Left cardiac atrium (tissue), 4 donors: ENCODE measurements at regions of chr15 and their contacts with region 1.

Region 1: DNA sequence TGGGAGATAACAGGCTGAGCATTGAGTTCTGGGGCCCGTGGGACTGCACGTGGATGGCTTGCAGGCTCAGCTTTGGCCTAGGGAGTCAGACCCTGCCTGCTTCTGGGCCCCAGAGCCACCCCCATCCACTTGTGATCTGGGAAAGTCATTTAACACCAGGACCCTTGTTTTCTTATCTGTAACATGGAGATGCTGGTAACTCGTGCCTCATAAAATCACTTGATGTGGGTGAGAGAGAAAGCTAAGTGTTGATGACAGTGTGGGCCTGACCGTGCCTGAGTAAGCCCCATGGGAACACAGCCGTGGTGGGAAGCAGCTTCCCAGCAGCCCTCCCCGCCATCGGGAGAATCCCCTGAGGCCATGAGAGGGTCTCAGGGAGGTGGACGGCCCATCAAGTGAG is 378.1 kb downstream of the GABRB3 start:
- DNase-seq: peak; percentile 55
- ATAC-seq: peak; percentile 77 to 79

Region 2: DNA sequence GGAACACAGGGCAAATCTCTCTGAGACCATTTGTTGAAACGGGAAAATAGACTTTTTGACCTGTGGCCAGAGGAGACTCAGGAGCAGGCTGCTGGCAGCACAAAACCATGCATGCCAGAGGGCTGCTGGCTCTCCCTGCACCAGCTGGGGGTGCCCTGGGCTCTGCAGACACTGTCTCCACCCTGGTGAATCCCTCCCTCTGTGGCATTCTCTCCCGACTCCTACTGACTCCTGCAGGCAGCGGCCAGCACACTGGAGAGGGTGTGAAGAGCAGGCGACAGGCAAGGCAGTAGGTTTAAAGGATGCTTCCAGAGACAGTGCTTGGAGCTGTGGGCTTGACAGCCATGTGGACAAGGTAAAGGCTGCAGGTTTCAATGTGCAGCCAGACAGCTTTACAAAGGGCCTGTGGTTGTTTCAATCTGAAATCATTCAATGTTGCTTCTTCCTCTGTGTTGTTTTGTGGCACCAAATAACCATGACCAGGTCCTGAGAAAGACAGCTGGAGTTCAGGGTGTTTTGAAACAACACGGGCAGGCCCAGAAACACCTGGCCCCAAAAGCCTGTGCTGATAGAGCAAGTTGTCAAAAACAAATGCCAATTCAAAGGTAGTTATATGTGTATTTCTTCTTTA is 100.6 kb before region 1 on chr15:
- intact Hi-C with region 1: loop called in 1 of 2 experiments (anchors 5 kb)
- DNase-seq: peak; percentile 55
- ATAC-seq: peak; percentile 97

Region 3: DNA sequence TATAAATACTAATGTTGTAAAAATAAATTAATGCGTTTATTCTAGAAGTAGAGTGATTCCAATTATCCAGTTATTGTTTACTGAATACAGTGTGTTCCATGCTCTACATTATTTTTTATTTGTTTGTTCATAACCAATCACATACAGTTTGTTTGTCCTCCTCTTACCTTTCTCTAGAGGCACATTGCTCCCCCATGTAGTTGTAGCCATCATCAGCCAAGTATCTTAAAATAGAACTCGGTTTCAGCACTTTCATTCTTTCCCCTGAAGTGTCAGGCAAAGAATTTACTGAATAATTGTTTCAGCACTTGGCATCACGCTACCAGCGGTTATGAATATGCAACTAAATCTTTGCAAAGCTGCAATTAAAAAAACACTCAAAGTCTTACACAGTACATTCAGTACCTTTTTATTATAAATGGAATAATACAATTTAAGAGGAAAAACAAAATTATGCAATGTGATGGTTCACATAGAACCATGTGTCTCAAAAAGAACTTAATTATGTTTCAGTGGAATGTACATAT is 83.0 kb before region 1 on chr15:
- intact Hi-C with region 1: no loop called
- DNase-seq: no peak
- ATAC-seq: peak; percentile 18 to 65

Region 4: DNA sequence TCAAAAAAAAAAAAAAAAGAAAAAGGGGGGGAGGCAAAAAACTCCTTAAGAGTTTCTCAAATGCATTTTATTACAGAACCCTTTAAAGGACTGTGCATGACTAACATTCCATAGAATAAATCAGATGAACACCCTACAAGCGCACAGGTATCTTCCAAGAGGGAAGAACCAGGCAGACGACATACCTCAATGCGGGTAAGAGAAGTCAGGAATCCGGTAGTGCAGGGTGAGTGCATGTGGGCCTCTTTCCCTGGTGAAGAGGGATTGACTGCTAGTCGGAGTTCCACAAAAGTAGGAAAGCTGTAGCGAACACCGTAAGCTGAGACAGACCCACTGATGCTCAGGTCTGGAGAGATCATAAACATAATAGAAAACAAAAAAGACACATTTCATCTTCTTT is 54.4 kb before region 1 on chr15:
- intact Hi-C with region 1: no loop called
- DNase-seq: no peak
- ATAC-seq: no peak

Region 5: DNA sequence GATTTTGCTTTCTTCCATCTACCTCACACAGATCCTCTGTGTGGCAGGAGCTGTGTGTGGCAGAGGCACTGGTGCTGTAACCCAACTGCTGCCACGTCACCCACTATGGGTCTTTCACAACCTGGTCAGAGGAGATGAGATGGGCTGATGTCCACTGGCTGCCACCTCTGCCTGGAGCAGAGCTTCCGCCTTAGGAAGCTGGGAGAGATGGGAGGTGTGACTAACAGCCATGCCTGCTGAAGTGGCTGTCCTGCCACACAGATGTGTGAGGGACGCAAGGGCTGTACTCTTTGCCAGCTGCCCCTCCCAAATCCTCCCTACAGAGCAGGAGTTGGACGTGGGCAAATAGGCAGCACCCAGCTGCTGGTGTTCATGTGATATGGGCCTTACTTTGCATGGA is 48.5 kb after region 1 on chr15:
- intact Hi-C with region 1: loop called in 1 of 2 experiments (anchors 5 kb)
- DNase-seq: peak; percentile 77
- ATAC-seq: peak; percentile 95 to 97